Activated CD4-positive, alpha-beta memory T cell treated with anti-CD3 and anti-CD28 coated beads for 36 hours (primary cell): ENCODE measurements at regions of chr2 and their contacts with region 1.

Region 1: DNA sequence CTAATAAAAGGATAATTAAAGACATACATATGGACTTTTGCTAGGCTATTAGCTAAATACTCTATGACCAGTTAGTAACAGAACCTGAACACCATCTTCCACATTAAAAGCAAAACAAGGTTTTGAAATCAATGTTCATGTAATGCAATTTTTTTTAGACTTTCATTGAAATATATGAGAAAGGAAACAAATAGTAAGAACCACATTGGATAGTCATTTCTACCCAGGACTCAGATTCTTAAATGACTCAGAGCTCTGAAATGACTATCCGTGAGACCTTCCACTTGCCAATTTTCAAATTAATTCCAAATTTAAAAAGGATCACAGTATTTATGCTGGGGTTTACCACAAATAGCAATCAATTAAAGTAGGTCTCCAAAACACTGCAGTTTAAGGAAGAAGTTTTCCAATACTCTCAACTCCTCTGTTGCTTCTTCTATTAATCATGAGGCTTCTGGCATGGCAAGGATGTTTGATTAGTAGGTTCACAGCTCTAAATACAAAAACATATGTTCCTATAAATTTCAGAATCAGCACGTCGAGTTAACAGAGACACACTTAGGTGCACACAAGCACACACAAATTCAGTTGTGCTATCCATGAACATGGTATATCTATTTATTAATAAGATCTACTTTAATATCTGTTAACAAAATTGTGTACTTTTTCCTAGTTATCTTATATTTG is 841.0 kb downstream of the RNF144A start:
- DNase-seq: no peak
- H3K4me3 Mint-ChIP-seq: no peak overlapping the region
- H3K27ac Mint-ChIP-seq: no peak overlapping the region
- H3K4me1 Mint-ChIP-seq: peaks cover 18% of the 10 kb centered on the region
- H3K27me3 Mint-ChIP-seq: peaks cover 20% of the 10 kb centered on the region

Region 2: DNA sequence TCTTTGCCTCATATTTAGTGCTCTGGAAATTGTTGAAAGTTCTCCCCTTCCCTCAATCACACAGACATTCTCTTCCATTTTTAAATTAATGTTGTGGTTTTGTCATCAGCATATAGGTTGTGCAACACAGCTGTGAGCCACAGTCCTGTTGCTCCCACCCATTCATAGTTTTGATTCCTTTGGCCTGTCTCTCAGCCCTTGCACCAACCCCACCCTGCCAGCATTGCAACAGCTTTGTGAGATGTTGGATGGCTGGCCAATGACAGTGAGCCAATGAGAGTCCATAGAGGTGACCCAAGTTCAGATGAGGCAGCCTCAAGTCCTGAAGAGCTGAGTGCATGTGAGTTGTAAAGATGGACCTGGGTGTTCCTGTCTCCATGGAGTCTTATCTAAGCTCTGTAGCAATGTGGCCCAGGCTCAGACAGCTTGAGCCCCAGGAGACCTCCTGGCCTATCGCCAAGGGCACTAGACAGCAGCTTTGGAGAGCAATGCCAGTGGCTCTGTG is 65.5 kb before region 1 on chr2:
- CTCF ChIA-PET with region 1: no interaction called
- POLR2A ChIA-PET with region 1: no interaction called
- intact Hi-C with region 1: loop called (anchors 5 kb)
- DNase-seq: no peak
- H3K4me3 Mint-ChIP-seq: peak overlapping the region; percentile 6
- H3K27ac Mint-ChIP-seq: no peak overlapping the region
- H3K4me1 Mint-ChIP-seq: peaks cover 37% of the 10 kb centered on the region
- H3K27me3 Mint-ChIP-seq: peaks cover 3% of the 10 kb centered on the region

Region 3: GRCh38 chr2:7773362-7774360 is 15.4 kb after region 1 on chr2:
- CTCF ChIA-PET with region 1: no interaction called
- POLR2A ChIA-PET with region 1: interaction called, 6 read pairs
- intact Hi-C with region 1: loop called (anchors 1 kb)
- DNase-seq: peak; percentile 65
- H3K4me3 Mint-ChIP-seq: no peak overlapping the region
- H3K27ac Mint-ChIP-seq: peak overlapping the region; percentile 66
- H3K4me1 Mint-ChIP-seq: peaks cover 33% of the 10 kb centered on the region
- H3K27me3 Mint-ChIP-seq: peaks cover 12% of the 10 kb centered on the region

Region 4: DNA sequence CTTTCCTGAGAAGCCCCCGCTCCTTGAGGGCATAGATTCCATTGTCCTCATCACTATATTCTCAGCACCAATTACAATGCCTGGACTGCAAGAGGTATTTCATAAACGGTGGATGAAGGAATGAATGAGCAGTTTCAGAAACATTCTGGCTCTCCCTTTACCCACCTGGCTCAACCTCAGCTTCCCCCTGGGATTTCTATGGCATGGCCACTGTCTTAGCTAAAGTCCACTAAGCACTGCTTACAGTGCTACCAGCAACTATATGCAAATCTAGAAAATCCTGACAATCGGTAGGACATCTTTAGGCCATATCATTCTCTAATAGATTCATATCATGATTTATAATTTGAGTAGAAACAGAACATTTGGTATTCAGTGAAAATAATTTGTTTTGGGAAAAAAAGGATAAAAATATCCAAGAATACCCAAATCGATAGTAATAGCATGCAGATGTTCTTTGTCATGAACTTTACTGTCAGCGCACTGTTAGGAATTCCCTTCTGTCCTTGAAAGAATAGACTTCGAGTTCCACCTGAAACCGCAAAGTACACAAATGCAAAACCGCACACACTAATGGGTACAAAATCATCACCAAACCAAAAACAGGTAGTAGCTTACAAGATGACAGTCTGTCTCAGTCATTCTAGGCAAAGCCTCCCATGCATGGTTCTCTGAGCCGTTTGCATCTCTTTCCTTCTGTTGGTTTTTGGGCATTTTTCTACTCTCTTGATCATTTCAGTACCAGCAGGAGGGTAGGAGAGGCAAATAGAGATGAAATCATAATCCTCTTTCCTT is 620.0 kb after region 1 on chr2:
- CTCF ChIA-PET with region 1: no interaction called
- POLR2A ChIA-PET with region 1: no interaction called
- intact Hi-C with region 1: loop called (anchors 10 kb)
- DNase-seq: peak; percentile 49
- H3K4me3 Mint-ChIP-seq: no peak overlapping the region
- H3K27ac Mint-ChIP-seq: peak overlapping the region; percentile 56
- H3K4me1 Mint-ChIP-seq: peaks cover 38% of the 10 kb centered on the region
- H3K27me3 Mint-ChIP-seq: no peaks in the 10 kb centered on the region